Psoas muscle (tissue), 8 donors: ENCODE measurements at regions of chr3 and their contacts with region 1.

Region 1: DNA sequence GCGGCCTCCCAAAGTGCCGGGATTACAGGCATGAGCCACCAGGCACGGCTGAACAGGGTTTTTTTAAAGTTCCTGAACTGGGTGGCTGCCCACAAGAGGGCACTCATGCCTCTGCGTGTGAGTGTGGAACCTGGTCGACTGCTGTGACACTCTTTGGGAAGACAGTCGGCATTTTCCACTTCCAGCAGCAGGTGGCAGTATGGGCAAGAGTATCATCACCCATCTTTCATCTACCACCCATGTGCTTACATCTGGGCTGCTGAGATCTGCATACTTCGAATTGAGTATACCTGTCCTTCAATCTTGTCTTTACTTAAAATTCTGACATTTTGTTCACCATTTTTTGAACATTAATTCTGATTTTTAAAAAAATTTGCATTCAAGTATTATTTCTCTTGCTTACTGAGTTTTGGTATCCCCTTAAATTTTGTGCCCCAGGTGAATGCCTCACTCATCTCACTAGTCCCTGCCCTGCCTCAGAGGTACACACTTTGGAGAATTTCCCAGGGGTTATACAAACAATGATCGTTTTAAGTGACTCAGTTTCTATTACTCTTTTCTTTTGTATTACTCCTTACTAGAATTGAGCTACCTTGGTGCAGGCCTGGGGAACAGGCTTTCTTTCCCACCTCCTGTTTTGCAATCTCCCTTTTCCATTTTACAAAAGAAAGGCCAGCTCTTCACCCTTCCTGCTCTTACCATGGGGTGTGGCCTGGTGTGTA is 11.8 kb downstream of the CLEC3B start:
- DNase-seq: peak; percentile 90 to 94
- ATAC-seq: peak; percentile 90 to 94 (median 92)
- H3K4me3 ChIP-seq: no peak overlapping the region
- H3K27ac ChIP-seq: no peak overlapping the region
- H3K4me1 ChIP-seq: peaks cover 13% of the 10 kb centered on the region
- H3K27me3 ChIP-seq: no peaks in the 10 kb centered on the region
- CTCF ChIP-seq: peak; percentile 90

Region 2: GRCh38 chr3:44893097-44893496 is 144.8 kb before region 1 on chr3:
- intact Hi-C with region 1: no loop called
- DNase-seq: no peak
- ATAC-seq: no peak
- H3K4me3 ChIP-seq: no peak overlapping the region
- H3K27ac ChIP-seq: no peak overlapping the region
- H3K4me1 ChIP-seq: no peaks in the 10 kb centered on the region
- H3K27me3 ChIP-seq: no peaks in the 10 kb centered on the region
- CTCF ChIP-seq: no peak

Region 3: DNA sequence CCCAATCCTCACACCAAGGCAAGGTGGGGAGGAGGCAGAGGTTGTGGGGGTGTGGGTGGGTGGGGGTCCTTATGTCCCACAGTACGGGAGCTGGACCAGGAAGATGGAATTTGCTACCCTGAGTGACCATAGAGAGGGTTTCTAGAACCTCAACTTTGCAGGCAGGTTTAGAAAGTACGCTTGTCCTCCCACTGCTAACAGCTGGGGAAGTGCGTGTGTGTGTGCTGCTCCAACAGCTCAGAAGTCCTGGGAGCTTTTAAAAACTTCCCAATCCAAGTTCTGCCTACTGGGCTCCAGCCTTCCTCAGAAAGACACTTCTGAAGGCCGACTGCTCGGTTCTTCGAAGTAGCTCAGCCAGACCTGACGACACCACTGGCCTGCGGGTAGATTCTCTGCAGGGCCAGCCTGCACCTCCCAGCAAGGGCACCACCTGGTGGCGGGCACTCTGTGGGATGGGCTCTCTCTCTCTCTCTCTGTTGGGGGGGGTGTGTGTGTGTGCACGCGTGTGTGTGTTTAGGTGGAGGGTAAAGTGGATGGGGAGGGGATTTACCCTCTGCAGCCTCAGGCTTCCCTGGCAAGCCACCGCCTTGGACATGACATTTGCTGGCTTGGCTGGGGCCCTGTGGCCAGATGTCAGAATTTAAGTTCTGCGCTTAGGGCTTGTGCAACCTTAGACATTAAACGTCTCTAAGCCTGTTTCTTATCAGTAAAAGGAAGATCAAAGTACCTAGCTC is 172.6 kb after region 1 on chr3:
- intact Hi-C with region 1: loop called (anchors 1 to 2 kb)
- DNase-seq: peak; percentile 86 to 93
- ATAC-seq: peak; percentile 98 to 100 (median 99)
- H3K4me3 ChIP-seq: no peak overlapping the region
- H3K27ac ChIP-seq: no peak overlapping the region
- H3K4me1 ChIP-seq: peaks cover 7% of the 10 kb centered on the region
- H3K27me3 ChIP-seq: no peaks in the 10 kb centered on the region
- CTCF ChIP-seq: peak; percentile 74

Region 4: GRCh38 chr3:45499529-45499928 is 461.6 kb after region 1 on chr3:
- intact Hi-C with region 1: loop called (anchors 1 to 10 kb)
- DNase-seq: no peak
- ATAC-seq: peak in 1 of 4 donors; percentile 35
- H3K4me3 ChIP-seq: no peak overlapping the region
- H3K27ac ChIP-seq: no peak overlapping the region
- H3K4me1 ChIP-seq: peaks cover 32% of the 10 kb centered on the region
- H3K27me3 ChIP-seq: no peaks in the 10 kb centered on the region
- CTCF ChIP-seq: peak; percentile 56